CD8-positive, alpha-beta T cell (primary cell): ENCODE measurements at regions of chr19 and their contacts with region 1.

Region 1: DNA sequence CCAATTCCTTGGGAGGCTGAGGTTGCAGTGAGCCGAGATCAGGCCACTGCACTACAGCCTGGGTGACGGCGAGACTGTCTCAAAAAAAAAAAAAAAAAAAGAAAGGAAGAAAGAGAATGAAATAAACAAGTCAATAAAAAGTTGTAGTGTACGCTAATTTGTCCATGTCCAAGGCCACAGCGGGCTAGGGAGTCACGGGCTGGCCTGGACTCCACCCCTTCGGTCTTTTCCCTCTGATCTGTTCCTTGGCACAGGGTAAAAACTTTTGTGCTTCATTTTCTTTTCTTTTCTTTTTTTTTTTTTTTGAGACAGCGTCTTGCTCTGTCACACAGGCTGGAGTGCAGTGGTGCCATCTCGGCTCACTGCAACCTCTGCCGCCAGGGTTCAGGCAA is 19.4 kb upstream of the MKNK2 start:
- DNase-seq: no peak
- ATAC-seq: peak; percentile 7
- H3K4me3 ChIP-seq: no peak overlapping the region
- H3K4me3 Mint-ChIP-seq: no peak overlapping the region
- H3K27ac ChIP-seq: no peak overlapping the region
- H3K27ac Mint-ChIP-seq: peak overlapping the region; percentile 37
- H3K4me1 ChIP-seq: peaks cover 11% of the 10 kb centered on the region
- H3K4me1 Mint-ChIP-seq: peaks cover 24% of the 10 kb centered on the region
- H3K27me3 ChIP-seq: no peaks in the 10 kb centered on the region
- H3K27me3 Mint-ChIP-seq: no peaks in the 10 kb centered on the region
- CTCF ChIP-seq: no peak

Region 2: GRCh38 chr19:2041683-2042484 is 28.5 kb before region 1 on chr19:
- CTCF ChIA-PET with region 1: interaction called, 10 read pairs
- POLR2A ChIA-PET with region 1: no interaction called
- intact Hi-C with region 1: loop called in 1 of 2 experiments (anchors 2 kb)
- DNase-seq: peak; percentile 99 to 100 (median 100)
- ATAC-seq: peak; percentile 85
- H3K4me3 ChIP-seq: peak overlapping the region; percentile 28 to 62
- H3K4me3 Mint-ChIP-seq: peak overlapping the region; percentile 65
- H3K27ac ChIP-seq: peak overlapping the region; percentile 96 to 100
- H3K27ac Mint-ChIP-seq: peak overlapping the region; percentile 93
- H3K4me1 ChIP-seq: peaks cover 54% of the 10 kb centered on the region
- H3K4me1 Mint-ChIP-seq: peaks cover 28% of the 10 kb centered on the region
- H3K27me3 ChIP-seq: no peaks in the 10 kb centered on the region
- H3K27me3 Mint-ChIP-seq: no peaks in the 10 kb centered on the region
- CTCF ChIP-seq: no peak

Region 3: GRCh38 chr19:2050991-2051772 is 19.2 kb before region 1 on chr19 and contains the start of gene MKNK2:
- CTCF ChIA-PET with region 1: interaction called, 30 read pairs
- POLR2A ChIA-PET with region 1: interaction called, 6 read pairs
- intact Hi-C with region 1: no loop called
- DNase-seq: peak; percentile 87 to 99 (median 94)
- ATAC-seq: peak; percentile 79
- H3K4me3 ChIP-seq: peak within 1 kb of the TSS; percentile 94 to 98
- H3K4me3 Mint-ChIP-seq: peak within 1 kb of the TSS; percentile 86
- H3K27ac ChIP-seq: peak within 1 kb of the TSS; percentile 78 to 94
- H3K27ac Mint-ChIP-seq: peak within 1 kb of the TSS; percentile 89
- H3K4me1 ChIP-seq: peaks cover 73% of the 10 kb centered on the region
- H3K4me1 Mint-ChIP-seq: peaks cover 46% of the 10 kb centered on the region
- H3K27me3 ChIP-seq: no peaks in the 10 kb centered on the region
- H3K27me3 Mint-ChIP-seq: no peaks in the 10 kb centered on the region
- CTCF ChIP-seq: peak; percentile 29
- total RNA-seq, gene MKNK2: 453 to 455 TPM

Region 4: DNA sequence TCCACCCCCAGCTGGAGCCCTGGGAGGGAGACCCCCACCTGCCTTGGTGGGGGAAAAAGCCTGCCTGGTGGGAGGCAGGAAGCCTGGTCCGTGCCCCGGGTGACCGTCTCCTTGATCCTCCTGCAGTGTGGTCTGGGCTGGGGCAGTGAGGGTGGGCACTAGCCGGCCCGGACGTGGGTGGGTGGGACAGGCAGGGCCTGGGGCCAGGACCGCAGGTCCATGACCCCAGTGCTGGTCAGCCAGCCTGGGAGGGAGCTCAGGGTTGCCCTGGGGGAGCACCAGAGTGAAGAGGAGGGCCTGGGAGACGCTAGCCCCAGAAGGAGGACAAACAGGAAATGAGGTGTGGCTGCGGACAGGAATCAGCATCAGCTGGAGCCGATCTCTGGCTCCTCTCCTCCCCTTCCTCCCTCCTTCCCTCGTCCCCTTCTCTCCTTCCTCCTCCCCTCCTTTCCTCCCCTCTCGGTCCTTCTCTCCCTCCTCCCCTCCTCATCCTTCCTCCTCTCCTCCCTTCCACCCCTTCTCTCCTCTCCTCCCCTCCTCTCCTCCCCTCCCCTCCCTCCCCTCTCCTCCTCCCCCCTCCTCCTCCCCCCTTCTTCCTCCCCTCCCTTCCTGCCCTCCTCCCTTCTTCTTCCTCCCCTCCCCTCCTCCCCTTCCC is 14.1 kb before region 1 on chr19:
- CTCF ChIA-PET with region 1: interaction called, 30 read pairs
- POLR2A ChIA-PET with region 1: interaction called, 4 read pairs
- intact Hi-C with region 1: loop called in 1 of 2 experiments (anchors 1 kb)
- DNase-seq: peak in 2 of 9 experiments; percentile 37 to 58
- ATAC-seq: no peak
- H3K4me3 ChIP-seq: no peak overlapping the region
- H3K4me3 Mint-ChIP-seq: no peak overlapping the region
- H3K27ac ChIP-seq: peak overlapping the region; percentile 30 to 82
- H3K27ac Mint-ChIP-seq: peak overlapping the region; percentile 77
- H3K4me1 ChIP-seq: peaks cover 80% of the 10 kb centered on the region
- H3K4me1 Mint-ChIP-seq: peaks cover 56% of the 10 kb centered on the region
- H3K27me3 ChIP-seq: no peaks in the 10 kb centered on the region
- H3K27me3 Mint-ChIP-seq: no peaks in the 10 kb centered on the region
- CTCF ChIP-seq: no peak